A673 (cell line): ENCODE measurements at regions of chr2 and their contacts with region 1.

Region 1: DNA sequence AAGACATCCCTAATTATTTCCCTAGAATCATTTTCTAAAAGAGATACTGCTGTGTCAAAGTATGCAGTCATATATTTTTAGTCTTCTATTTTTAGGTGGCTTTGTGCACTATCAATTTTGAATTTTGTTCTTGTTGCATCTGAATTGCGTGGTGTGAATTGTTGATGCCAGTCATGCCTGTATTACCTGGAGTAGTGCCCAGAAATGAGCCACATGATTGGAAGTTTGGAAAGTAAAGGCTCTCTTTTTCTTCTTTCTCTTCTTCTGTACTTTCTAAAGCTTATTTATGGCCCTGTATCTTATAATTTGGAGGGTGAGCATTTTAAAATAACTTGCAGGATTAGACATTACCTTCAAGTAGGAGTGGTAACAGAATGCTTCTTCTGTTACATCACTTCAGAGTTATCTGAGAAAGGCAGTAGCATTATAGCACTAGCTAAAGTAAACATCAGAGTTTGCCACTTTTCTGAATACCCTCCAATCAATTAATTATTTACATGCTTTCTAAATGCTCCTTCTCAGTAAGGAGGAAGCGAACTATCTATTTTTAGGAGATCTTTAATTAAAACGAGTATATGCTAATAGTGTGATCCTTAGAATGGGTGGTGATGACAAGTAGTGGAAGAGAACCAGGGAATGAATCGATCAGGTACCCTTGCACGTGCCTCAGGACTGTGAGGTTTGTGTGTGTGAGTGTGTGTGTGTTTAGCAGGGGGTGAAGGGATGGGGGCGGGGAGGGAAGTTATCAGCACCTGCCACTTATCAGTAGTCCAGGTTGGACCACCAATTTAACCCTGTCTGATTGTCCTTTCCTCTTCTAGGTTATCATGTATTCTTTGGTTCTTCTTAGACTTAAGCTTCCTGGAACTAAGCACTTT is 112.5 kb downstream of the MAP3K20 start:
- DNase-seq: no peak
- H3K4me3 ChIP-seq: no peak overlapping the region
- H3K27ac ChIP-seq: no peak overlapping the region
- H3K4me1 ChIP-seq: peaks cover 12% of the 10 kb centered on the region
- H3K27me3 ChIP-seq: no peaks in the 10 kb centered on the region
- CTCF ChIP-seq: no peak

Region 2: DNA sequence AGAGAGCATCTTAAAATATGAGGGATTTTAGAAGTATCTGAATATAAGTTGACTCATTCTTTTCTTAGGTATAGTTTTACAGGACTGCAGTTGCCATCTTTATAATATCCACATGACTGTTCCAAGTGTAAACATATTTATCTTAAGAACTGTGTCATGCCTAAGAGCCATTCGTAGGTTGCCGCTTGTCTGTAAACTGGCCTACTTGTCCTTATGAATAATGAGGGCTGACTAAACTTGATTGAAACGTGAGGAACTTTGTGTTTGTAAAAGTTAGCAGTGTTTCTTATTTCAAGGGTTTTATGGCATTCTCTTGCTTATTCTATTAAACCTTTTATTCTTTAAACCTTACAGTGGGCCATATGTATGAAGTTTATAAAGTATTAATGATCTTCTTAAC is 12.9 kb before region 1 on chr2:
- CTCF ChIA-PET with region 1: no interaction called
- POLR2A ChIA-PET with region 1: no interaction called
- intact Hi-C with region 1: no loop called
- DNase-seq: no peak
- H3K4me3 ChIP-seq: no peak overlapping the region
- H3K27ac ChIP-seq: no peak overlapping the region
- H3K4me1 ChIP-seq: peaks cover 7% of the 10 kb centered on the region
- H3K27me3 ChIP-seq: no peaks in the 10 kb centered on the region
- CTCF ChIP-seq: no peak

Region 3: GRCh38 chr2:173808718-173809117 is 620.6 kb after region 1 on chr2:
- CTCF ChIA-PET with region 1: interaction called, 11 read pairs
- POLR2A ChIA-PET with region 1: no interaction called
- intact Hi-C with region 1: no loop called
- DNase-seq: peak; percentile 23
- H3K4me3 ChIP-seq: no peak overlapping the region
- H3K27ac ChIP-seq: no peak overlapping the region
- H3K4me1 ChIP-seq: no peaks in the 10 kb centered on the region
- H3K27me3 ChIP-seq: peaks cover 5% of the 10 kb centered on the region
- CTCF ChIP-seq: no peak